HepG2 (cell line): ENCODE measurements at regions of chr12 and their contacts with region 1.

Region 1: DNA sequence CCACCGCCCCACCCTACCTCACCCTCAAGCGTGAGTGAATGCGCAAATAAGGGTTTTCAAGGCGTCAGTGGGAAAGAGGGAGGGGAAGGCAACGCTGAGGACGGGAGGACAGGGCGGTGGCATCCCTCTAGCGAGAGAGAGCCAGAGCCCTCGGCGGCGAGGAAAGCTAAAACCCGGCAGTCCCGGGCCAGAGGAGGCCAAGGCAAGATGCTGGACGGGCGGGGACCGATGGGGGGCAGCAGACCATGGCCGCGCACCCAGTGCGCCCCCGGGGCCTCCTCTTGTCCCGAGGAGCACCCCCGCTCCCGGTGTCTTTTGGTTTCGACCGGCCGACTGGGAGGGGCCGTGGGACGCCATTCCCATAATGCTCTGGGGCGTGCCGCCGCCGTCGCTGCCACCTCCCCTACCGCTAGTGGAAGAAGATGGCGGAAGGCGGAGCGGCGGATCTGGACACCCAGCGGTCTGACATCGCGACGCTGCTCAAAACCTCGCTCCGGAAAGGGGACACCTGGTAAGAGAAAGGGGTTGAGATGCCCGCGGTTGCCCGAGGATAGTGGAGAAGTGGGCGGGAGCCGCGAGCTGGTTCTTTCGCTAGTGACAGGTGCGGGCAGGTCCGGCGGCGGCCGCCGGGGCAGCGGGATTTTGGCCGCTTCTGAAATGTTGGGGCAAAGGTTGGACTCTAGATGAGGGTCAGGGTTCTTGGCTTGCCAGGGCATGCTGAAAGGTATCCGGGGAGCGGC is at the start of gene USP15:
- DNase-seq: peak; percentile 90
- ATAC-seq: peak; percentile 96
- H3K4me3 ChIP-seq: peak within 1 kb of the TSS; percentile 94 to 96 (median 95)
- H3K27ac ChIP-seq: peak within 1 kb of the TSS; percentile 86
- H3K4me1 ChIP-seq: peaks cover 36% of the 10 kb centered on the region
- H3K27me3 ChIP-seq: no peaks in the 10 kb centered on the region; a peak in 1 of 5 replicates
- CTCF ChIP-seq: peak; percentile 97
- EP300 ChIP-seq: peak in 1 of 2 experiments; percentile 10; a peak in 1 of 4 replicates
- POLR2A ChIP-seq: peak; percentile 81 to 93
- RAD21 ChIP-seq: peak; percentile 72
- total RNA-seq, gene USP15: 51.7 and 71.1 TPM in 2 replicates

Region 2: GRCh38 chr12:62466594-62467491 is 206.7 kb after region 1 on chr12 and contains the start of gene MON2:
- CTCF ChIA-PET with region 1: no interaction called
- POLR2A ChIA-PET with region 1: no interaction called
- in situ Hi-C with region 1: no loop called
- intact Hi-C with region 1: loop called (anchors 5 kb)
- DNase-seq: peak; percentile 73
- ATAC-seq: peak; percentile 99
- H3K4me3 ChIP-seq: peak within 1 kb of the TSS; percentile 81 to 98 (median 85)
- H3K27ac ChIP-seq: peak within 1 kb of the TSS; percentile 77
- H3K4me1 ChIP-seq: peaks cover 19% of the 10 kb centered on the region
- H3K27me3 ChIP-seq: no peaks in the 10 kb centered on the region; a peak in 1 of 5 replicates
- CTCF ChIP-seq: no peak
- EP300 ChIP-seq: no peak; a peak in 1 of 4 replicates
- POLR2A ChIP-seq: peak; percentile 90 to 91
- RAD21 ChIP-seq: no peak
- total RNA-seq, gene MON2: 24.8 and 34.0 TPM in 2 replicates